Naive thymus-derived CD4-positive, alpha-beta T cell (primary cell): ENCODE measurements at regions of chr20 and their contacts with region 1.

Region 1: GRCh38 chr20:62793912-62794724 is 2.2 kb upstream of the MRGBP start:
- DNase-seq: peak; percentile 85 to 100 (median 93)
- ATAC-seq: peak; percentile 87
- H3K4me3 ChIP-seq: peak overlapping the region; percentile 78
- H3K4me3 Mint-ChIP-seq: peak overlapping the region; percentile 78 to 95 (median 87)
- H3K27ac ChIP-seq: peak overlapping the region; percentile 83
- H3K27ac Mint-ChIP-seq: peak overlapping the region; percentile 86 to 97 (median 92)
- H3K4me1 ChIP-seq: peaks cover 15 to 24% of the 10 kb centered on the region in 2 donors
- H3K4me1 Mint-ChIP-seq: peaks cover 26 to 44% (median 41%) of the 10 kb centered on the region in 7 donors
- H3K27me3 ChIP-seq: no peaks in the 10 kb centered on the region
- H3K27me3 Mint-ChIP-seq: peaks cover 0 to 3% (median 0%) of the 10 kb centered on the region in 5 donors

Region 2: GRCh38 chr20:62386383-62387218 is 407.5 kb before region 1 on chr20 and contains the start of gene RPS21:
- CTCF ChIA-PET with region 1: no interaction called
- POLR2A ChIA-PET with region 1: interaction called, 5 read pairs
- intact Hi-C with region 1: loop called (anchors 5 kb)
- DNase-seq: peak; percentile 89 to 95 (median 92)
- ATAC-seq: peak; percentile 95
- H3K4me3 ChIP-seq: peak within 1 kb of the TSS; percentile 94
- H3K4me3 Mint-ChIP-seq: peak within 1 kb of the TSS; percentile 90 to 96 (median 92)
- H3K27ac ChIP-seq: peak within 1 kb of the TSS; percentile 98
- H3K27ac Mint-ChIP-seq: peak within 1 kb of the TSS; percentile 89 to 96 (median 93)
- H3K4me1 ChIP-seq: peaks cover 24 to 28% of the 10 kb centered on the region in 2 donors
- H3K4me1 Mint-ChIP-seq: peaks cover 40 to 59% (median 50%) of the 10 kb centered on the region in 7 donors
- H3K27me3 ChIP-seq: no peaks in the 10 kb centered on the region
- H3K27me3 Mint-ChIP-seq: no peaks in the 10 kb centered on the region
- total RNA-seq, gene RPS21: 2,026 to 3,407 (median 3,308) TPM

Region 3: DNA sequence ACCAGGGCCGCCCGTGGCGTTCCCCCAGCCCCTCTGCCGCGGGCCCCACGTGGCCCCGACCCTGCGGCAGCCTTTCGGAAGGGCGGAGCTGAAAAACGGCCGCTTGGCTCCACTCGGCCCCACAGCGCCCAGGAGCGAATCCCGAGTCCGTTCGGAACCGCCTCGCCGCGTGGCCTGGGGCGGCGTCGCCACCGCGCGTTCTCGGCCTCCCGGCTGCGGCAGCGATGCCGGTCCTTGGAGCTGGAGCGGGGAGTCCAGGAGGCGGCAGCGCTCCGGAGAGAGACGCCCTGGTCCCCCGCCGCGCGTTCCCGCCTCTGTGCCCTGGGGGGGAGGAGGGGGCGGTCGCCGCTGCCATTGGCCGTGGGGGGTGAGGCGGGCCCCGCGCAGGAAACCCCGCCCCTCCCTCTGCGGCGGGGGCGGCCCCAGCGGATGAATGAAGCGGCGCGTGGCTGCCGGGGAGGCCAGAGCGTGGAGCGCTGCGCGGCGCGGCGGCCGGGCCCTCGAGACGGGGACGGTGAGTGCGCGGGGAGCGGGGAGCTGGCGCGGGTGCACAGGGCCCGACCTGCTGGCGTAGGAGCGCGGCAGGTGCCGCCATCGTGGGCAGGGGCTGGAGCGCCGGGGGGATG is 152.0 kb before region 1 on chr20 and contains the start of gene SLCO4A1:
- CTCF ChIA-PET with region 1: no interaction called
- POLR2A ChIA-PET with region 1: interaction called, 11 read pairs
- intact Hi-C with region 1: loop called (anchors 1 to 2 kb)
- DNase-seq: peak; percentile 76 to 95 (median 83)
- ATAC-seq: peak; percentile 97
- H3K4me3 ChIP-seq: peak within 1 kb of the TSS; percentile 57
- H3K4me3 Mint-ChIP-seq: peak within 1 kb of the TSS; percentile 63 to 88 (median 78)
- H3K27ac ChIP-seq: peak within 1 kb of the TSS; percentile 56
- H3K27ac Mint-ChIP-seq: peak within 1 kb of the TSS in 5 of 9 donors; percentile 10 to 68 (median 53)
- H3K4me1 ChIP-seq: peaks cover 11 to 14% of the 10 kb centered on the region in 2 donors
- H3K4me1 Mint-ChIP-seq: peaks cover 0 to 35% (median 5%) of the 10 kb centered on the region in 7 donors
- H3K27me3 ChIP-seq: no peaks in the 10 kb centered on the region
- H3K27me3 Mint-ChIP-seq: peaks cover 0 to 11% (median 0%) of the 10 kb centered on the region in 5 donors
- total RNA-seq, gene SLCO4A1: 0.81 to 45.5 (median 1.4) TPM

Region 4: GRCh38 chr20:62740286-62741141 is 53.6 kb before region 1 on chr20:
- CTCF ChIA-PET with region 1: interaction called, 4 read pairs
- POLR2A ChIA-PET with region 1: interaction called, 22 read pairs
- intact Hi-C with region 1: loop called (anchors 1 kb)
- DNase-seq: peak; percentile 44 to 78 (median 68)
- ATAC-seq: peak; percentile 87
- H3K4me3 ChIP-seq: peak overlapping the region; percentile 70
- H3K4me3 Mint-ChIP-seq: peak overlapping the region; percentile 70 to 91 (median 82)
- H3K27ac ChIP-seq: peak overlapping the region; percentile 60
- H3K27ac Mint-ChIP-seq: peak overlapping the region; percentile 75 to 97 (median 86)
- H3K4me1 ChIP-seq: peaks cover 38 to 50% of the 10 kb centered on the region in 2 donors
- H3K4me1 Mint-ChIP-seq: peaks cover 16 to 43% (median 29%) of the 10 kb centered on the region in 7 donors
- H3K27me3 ChIP-seq: no peaks in the 10 kb centered on the region
- H3K27me3 Mint-ChIP-seq: peaks cover 0 to 21% (median 0%) of the 10 kb centered on the region in 5 donors

Region 5: DNA sequence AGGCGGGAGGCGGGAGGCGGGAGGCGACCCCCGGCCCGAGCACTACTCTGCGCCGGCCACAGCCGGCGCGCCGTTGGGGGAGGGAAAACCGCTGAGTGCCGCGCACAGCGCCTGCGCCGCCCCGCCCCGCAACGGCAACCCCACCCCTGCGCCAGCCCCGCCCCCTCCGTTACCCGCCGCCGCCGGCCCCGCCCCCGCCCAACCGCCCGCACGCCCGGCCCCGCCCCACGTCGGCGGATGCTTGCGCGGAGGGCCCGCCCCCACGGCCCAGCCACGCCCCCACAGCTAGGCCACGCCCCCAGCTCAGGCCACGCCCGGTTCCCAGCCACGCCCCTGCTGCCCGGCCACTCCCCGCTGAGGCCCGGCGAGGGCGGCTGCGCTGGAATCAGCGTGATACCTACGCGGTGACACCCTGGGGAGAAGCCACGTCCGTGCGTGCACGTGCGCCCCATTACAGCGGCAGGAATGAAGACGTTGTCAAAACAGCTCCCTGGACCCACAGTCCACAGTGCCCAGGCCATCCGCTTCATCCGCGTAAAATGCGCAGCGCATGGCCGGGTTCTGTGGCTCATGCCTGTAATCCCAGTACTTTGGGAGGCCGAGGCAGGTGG is 67.7 kb after region 1 on chr20 and contains the start of gene TCFL5:
- CTCF ChIA-PET with region 1: no interaction called
- POLR2A ChIA-PET with region 1: interaction called, 10 read pairs
- intact Hi-C with region 1: loop called (anchors 1 kb)
- DNase-seq: peak; percentile 90 to 100 (median 93)
- ATAC-seq: peak; percentile 98
- H3K4me3 ChIP-seq: no peak within 1 kb of the TSS
- H3K4me3 Mint-ChIP-seq: peak within 1 kb of the TSS; percentile 69 to 84 (median 76)
- H3K27ac ChIP-seq: peak within 1 kb of the TSS; percentile 48
- H3K27ac Mint-ChIP-seq: peak within 1 kb of the TSS; percentile 26 to 91 (median 74)
- H3K4me1 ChIP-seq: peaks cover 9 to 15% of the 10 kb centered on the region in 2 donors
- H3K4me1 Mint-ChIP-seq: peaks cover 10 to 30% (median 22%) of the 10 kb centered on the region in 7 donors
- H3K27me3 ChIP-seq: no peaks in the 10 kb centered on the region
- H3K27me3 Mint-ChIP-seq: peaks cover 0 to 37% (median 0%) of the 10 kb centered on the region in 5 donors
- total RNA-seq, gene TCFL5: 3.7 to 10.8 (median 7.5) TPM

Region 6: DNA sequence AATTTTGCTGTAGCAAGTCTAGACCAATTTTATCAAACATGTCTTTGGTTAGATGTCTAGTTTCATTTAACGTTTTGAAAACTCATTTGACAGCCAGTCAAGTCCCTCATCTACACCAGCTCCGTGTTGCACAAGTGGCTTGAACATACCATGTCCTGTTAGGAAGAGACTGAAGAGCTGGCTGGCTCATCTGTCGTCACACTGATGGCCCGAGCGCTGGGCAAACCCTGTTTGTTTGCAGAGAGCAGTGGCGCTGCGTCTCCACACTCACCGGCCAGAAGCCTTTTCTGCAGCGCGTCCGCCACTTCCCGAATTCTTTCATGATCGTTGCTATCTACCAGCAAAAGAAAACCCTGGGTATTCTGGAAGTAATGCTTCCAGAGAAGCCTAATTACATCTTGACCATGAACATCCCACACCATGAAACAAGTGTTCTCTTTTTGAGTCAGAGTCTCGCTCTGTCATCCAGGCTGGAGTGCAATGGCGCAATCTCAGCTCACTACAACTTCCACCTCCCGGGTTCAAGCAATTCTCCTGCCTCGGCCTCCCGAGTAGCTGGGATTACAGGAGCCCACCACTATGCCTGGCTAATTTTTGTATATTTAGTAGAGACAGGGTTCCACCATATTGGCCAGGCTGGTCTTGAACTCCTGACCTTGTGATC is 78.2 kb after region 1 on chr20:
- CTCF ChIA-PET with region 1: no interaction called
- POLR2A ChIA-PET with region 1: no interaction called
- intact Hi-C with region 1: no loop called
- DNase-seq: no peak
- ATAC-seq: no peak
- H3K4me3 ChIP-seq: no peak overlapping the region
- H3K4me3 Mint-ChIP-seq: no peak overlapping the region
- H3K27ac ChIP-seq: no peak overlapping the region
- H3K27ac Mint-ChIP-seq: no peak overlapping the region
- H3K4me1 ChIP-seq: peaks cover 0 to 6% of the 10 kb centered on the region in 2 donors
- H3K4me1 Mint-ChIP-seq: peaks cover 7 to 36% (median 21%) of the 10 kb centered on the region in 7 donors
- H3K27me3 ChIP-seq: no peaks in the 10 kb centered on the region
- H3K27me3 Mint-ChIP-seq: peaks cover 0 to 9% (median 0%) of the 10 kb centered on the region in 5 donors

Region 7: GRCh38 chr20:63627129-63627750 is 833.1 kb after region 1 on chr20:
- CTCF ChIA-PET with region 1: no interaction called
- POLR2A ChIA-PET with region 1: no interaction called
- intact Hi-C with region 1: loop called in 1 of 2 experiments (anchors 10 kb)
- DNase-seq: peak; percentile 74 to 99 (median 97)
- ATAC-seq: peak; percentile 93
- H3K4me3 ChIP-seq: peak overlapping the region; percentile 96
- H3K4me3 Mint-ChIP-seq: peak overlapping the region; percentile 93 to 99 (median 98)
- H3K27ac ChIP-seq: peak overlapping the region; percentile 85
- H3K27ac Mint-ChIP-seq: peak overlapping the region; percentile 79 to 98 (median 95)
- H3K4me1 ChIP-seq: peaks cover 29 to 40% of the 10 kb centered on the region in 2 donors
- H3K4me1 Mint-ChIP-seq: peaks cover 28 to 64% (median 42%) of the 10 kb centered on the region in 7 donors
- H3K27me3 ChIP-seq: no peaks in the 10 kb centered on the region
- H3K27me3 Mint-ChIP-seq: no peaks in the 10 kb centered on the region